ENCODE measurements at regions of chr9 and their contacts with region 1.

Region 1: DNA sequence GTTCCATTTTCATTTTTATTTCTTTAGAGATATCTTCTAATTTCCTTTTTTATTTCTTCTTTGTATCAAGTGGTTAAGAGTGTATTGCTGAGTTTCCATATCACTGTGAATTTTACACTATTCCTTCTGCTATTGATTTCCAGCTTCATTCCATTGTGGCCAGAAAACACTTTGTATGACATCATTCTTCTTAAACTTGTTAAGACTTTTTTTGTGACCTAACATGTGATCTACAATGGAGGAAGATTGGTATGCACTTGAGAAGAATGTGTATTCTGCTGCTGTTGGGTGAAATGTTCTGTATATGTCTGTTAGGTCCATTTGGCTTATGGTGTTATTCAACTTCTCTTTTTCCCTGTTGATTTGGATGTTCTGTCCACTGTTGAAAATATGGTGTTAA is 274.2 kb upstream of the PUM3 start:
- DNase-seq: no peak
- ATAC-seq: no peak
- H3K4me3 ChIP-seq: no peak overlapping the region
- H3K27ac ChIP-seq: no peak overlapping the region
- H3K4me1 ChIP-seq: no peaks in the 10 kb centered on the region
- H3K27me3 ChIP-seq: peaks cover 9% of the 10 kb centered on the region
- CTCF ChIP-seq: no peak
- POLR2A ChIP-seq: no peak
- RAD21 ChIP-seq: no peak

Region 2: GRCh38 chr9:3161665-3162306 is 43.7 kb after region 1 on chr9:
- CTCF ChIA-PET with region 1: no interaction called
- POLR2A ChIA-PET with region 1: no interaction called
- RAD21 ChIA-PET with region 1: no interaction called
- intact Hi-C with region 1: loop called (anchors 10 kb)
- DNase-seq: no peak
- ATAC-seq: no peak
- H3K4me3 ChIP-seq: no peak overlapping the region
- H3K27ac ChIP-seq: no peak overlapping the region
- H3K4me1 ChIP-seq: no peaks in the 10 kb centered on the region
- H3K27me3 ChIP-seq: peaks cover 47% of the 10 kb centered on the region
- CTCF ChIP-seq: no peak
- POLR2A ChIP-seq: no peak
- RAD21 ChIP-seq: no peak

Measured in HCT116 (cell line).